ENCODE measurements at regions of chr17 and their contacts with region 1.

Region 1: GRCh38 chr17:42405963-42406495 is 17.0 kb downstream of the CAVIN1 start:
- DNase-seq: peak; percentile 82 to 90
- ATAC-seq: peak; percentile 56 to 67
- H3K4me3 ChIP-seq: no peak overlapping the region
- H3K27ac ChIP-seq: peak overlapping the region in 1 of 2 experiments; percentile 84; a peak in 3 of 6 replicates
- H3K4me1 ChIP-seq: peaks cover 73% of the 10 kb centered on the region
- CTCF ChIP-seq: peak; percentile 97
- EP300 ChIP-seq: no peak
- POLR2A ChIP-seq: no peak
- RAD21 ChIP-seq: peak; percentile 98 to 99

Region 2: GRCh38 chr17:42294469-42295398 is 111.3 kb before region 1 on chr17:
- CTCF ChIA-PET with region 1: interaction called, 10 read pairs
- POLR2A ChIA-PET with region 1: no interaction called
- DNase-seq: no peak
- ATAC-seq: no peak
- H3K4me3 ChIP-seq: no peak overlapping the region
- H3K27ac ChIP-seq: peak overlapping the region in 1 of 2 experiments; percentile 1; a peak in 1 of 6 replicates
- H3K4me1 ChIP-seq: no peaks in the 10 kb centered on the region
- CTCF ChIP-seq: no peak
- EP300 ChIP-seq: no peak
- POLR2A ChIP-seq: no peak
- RAD21 ChIP-seq: no peak

Region 3: DNA sequence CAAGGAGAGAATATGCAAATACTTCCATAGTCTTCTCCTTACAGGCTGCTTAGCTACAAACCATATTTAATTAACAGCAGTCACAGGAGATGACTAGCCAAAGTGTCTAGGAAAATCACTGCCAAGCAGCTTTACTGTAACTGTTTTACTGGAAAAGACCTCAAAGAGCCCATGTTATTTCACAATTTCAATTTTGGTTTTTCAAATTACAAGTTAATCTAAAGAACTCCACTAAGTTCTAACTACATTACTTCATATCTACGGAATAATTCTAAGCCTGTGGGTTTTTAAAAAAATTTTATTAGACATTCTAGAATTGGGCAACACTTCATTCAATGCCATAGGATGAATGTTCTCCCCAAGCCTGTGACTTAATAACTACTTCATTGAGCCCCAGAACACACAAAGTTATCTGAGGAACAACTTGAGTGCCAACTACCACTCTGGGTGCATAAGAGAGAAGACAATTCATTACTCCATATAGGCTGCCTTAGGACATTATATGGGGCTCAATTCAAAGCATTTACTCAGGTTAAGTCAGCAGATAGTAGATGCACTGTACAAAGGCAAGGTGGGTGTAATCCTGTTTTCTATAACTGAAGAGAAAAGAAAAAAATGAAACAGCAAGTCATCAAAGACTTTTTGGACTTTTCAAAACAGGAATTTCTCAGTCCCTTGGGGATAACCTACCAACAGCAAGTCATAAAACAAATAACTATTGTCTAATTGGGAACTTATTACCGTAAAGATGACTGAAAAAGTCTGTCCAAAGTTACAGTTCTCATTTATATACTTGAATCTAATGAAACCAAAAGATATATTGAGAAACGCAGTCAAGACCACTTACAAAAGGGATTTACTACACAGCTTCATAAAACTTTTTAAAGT is 50.8 kb before region 1 on chr17:
- CTCF ChIA-PET with region 1: interaction called, 15 read pairs
- POLR2A ChIA-PET with region 1: no interaction called
- DNase-seq: no peak
- ATAC-seq: peak in 1 of 2 experiments; percentile 25; a peak in 1 of 6 replicates
- H3K4me3 ChIP-seq: no peak overlapping the region
- H3K27ac ChIP-seq: peak overlapping the region in 1 of 2 experiments; percentile 35; a peak in 1 of 6 replicates
- H3K4me1 ChIP-seq: peaks cover 19% of the 10 kb centered on the region
- CTCF ChIP-seq: no peak
- EP300 ChIP-seq: no peak
- POLR2A ChIP-seq: no peak
- RAD21 ChIP-seq: no peak

Region 4: GRCh38 chr17:42378597-42379594 is 27.1 kb before region 1 on chr17:
- CTCF ChIA-PET with region 1: interaction called, 21 read pairs
- POLR2A ChIA-PET with region 1: no interaction called
- DNase-seq: no peak
- ATAC-seq: peak; percentile 66 to 73
- H3K4me3 ChIP-seq: peak overlapping the region; percentile 24
- H3K27ac ChIP-seq: peak overlapping the region; percentile 45 to 81
- H3K4me1 ChIP-seq: peaks cover 26% of the 10 kb centered on the region
- CTCF ChIP-seq: no peak
- EP300 ChIP-seq: no peak
- POLR2A ChIP-seq: no peak
- RAD21 ChIP-seq: no peak

Region 5: GRCh38 chr17:42422958-42423712 is 17.1 kb after region 1 on chr17 and contains the start of gene CAVIN1:
- CTCF ChIA-PET with region 1: interaction called, 180 read pairs
- POLR2A ChIA-PET with region 1: interaction called, 56 read pairs
- DNase-seq: peak; percentile 97 to 99
- ATAC-seq: peak; percentile 71 to 86
- H3K4me3 ChIP-seq: peak within 1 kb of the TSS; percentile 93
- H3K27ac ChIP-seq: peak within 1 kb of the TSS; percentile 93 to 95
- H3K4me1 ChIP-seq: peaks cover 45% of the 10 kb centered on the region
- CTCF ChIP-seq: no peak
- EP300 ChIP-seq: no peak
- POLR2A ChIP-seq: peak; percentile 99
- RAD21 ChIP-seq: peak in 1 of 2 experiments; percentile 18; a peak in 1 of 5 replicates
- polyA plus RNA-seq, gene CAVIN1: 91.4 and 101 TPM in 2 replicates

Region 6: DNA sequence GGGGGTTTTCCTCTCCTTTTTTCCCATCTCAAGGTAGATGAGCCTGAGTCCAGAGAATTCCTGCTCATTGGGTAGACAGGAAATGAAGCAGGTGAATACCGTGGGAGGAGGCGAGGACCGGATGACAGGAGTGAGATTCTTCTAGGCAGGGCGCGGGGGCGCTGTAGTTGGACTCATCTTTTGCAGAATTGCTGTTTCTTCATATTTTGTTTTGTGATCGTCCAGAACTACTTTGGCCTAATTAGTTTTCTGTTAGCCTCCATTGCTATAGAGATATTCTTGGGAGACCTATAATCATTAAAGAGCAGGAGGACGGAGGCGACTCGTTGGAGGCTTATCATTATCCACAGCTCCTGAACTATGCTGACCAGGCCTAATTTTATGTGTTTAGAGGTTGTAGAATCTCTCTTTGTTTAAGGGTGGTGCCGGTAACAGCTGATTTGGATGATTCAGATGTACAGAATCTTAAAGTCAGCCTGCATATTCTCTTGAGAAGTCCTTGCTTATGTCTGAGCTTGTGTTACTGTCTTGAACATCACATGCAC is 53.3 kb after region 1 on chr17:
- CTCF ChIA-PET with region 1: interaction called, 20 read pairs
- POLR2A ChIA-PET with region 1: no interaction called
- DNase-seq: peak; percentile 68 to 74
- ATAC-seq: peak; percentile 77 to 79
- H3K4me3 ChIP-seq: peak overlapping the region; percentile 83
- H3K27ac ChIP-seq: peak overlapping the region; percentile 84 to 88
- H3K4me1 ChIP-seq: peaks cover 48% of the 10 kb centered on the region
- CTCF ChIP-seq: peak; percentile 79
- EP300 ChIP-seq: no peak
- POLR2A ChIP-seq: no peak
- RAD21 ChIP-seq: 0 out of 5 replicates have a peak, but pooled peaks of 1 of the 2 experiments have one; percentile 22

Measured in A549 (cell line).